ENCODE measurements at regions of chr6 and their contacts with region 1.

Region 1: DNA sequence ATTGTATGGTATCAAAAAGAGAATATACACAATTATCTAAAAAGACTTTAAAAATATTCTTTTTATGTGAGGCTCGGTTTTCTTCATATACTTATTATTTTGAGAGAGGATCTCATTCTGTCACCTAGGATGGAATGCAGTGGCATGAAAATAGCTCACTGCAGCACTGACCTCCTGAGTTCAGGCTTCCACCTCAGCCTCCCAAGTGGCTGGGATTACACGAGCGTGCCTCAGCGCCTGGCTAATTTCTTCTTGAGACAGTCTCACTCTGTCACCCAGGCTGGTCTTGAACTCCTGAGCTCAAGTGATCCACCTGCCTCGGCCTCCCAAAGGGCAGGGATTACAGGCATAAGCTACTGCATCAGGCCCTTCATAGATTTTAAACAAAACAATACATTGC is 10.7 kb downstream of the DEK start:
- DNase-seq: no peak
- H3K4me3 ChIP-seq: no peak overlapping the region
- H3K27ac ChIP-seq: no peak overlapping the region
- H3K4me1 ChIP-seq: no peaks in the 10 kb centered on the region
- H3K27me3 ChIP-seq: no peaks in the 10 kb centered on the region
- CTCF ChIP-seq: no peak
- EP300 ChIP-seq: no peak
- POLR2A ChIP-seq: no peak
- RAD21 ChIP-seq: no peak

Region 2: DNA sequence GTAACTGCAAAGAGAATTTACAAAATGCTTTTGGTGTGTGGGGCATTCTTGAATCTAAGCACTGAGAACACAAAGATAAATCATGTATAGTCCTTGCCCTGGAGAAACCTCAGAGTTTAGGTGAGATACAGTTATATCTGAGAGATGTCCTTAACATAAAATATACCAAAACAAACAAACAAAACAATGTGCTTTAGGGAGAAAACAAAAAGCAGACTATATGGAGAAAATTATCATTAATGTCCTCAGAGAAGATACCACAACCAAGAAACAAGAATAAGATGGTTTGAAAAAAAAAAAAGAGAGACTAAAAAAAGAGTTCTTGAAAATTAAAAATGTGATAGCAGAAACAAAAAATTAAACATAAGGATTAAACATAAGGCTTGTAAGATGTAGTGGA is 274.2 kb before region 1 on chr6:
- CTCF ChIA-PET with region 1: no interaction called
- POLR2A ChIA-PET with region 1: no interaction called
- DNase-seq: no peak
- H3K4me3 ChIP-seq: no peak overlapping the region
- H3K27ac ChIP-seq: no peak overlapping the region
- H3K4me1 ChIP-seq: peaks cover 0 to 5% (median 4%) of the 10 kb centered on the region in 4 experiments; a peak in 5 of 7 replicates
- H3K27me3 ChIP-seq: no peaks in the 10 kb centered on the region
- CTCF ChIP-seq: no peak
- EP300 ChIP-seq: no peak
- POLR2A ChIP-seq: no peak
- RAD21 ChIP-seq: no peak

Region 3: GRCh38 chr6:18242062-18242851 is 11.4 kb before region 1 on chr6:
- CTCF ChIA-PET with region 1: interaction called, 4 read pairs
- POLR2A ChIA-PET with region 1: interaction called, 21 read pairs
- DNase-seq: no peak
- H3K4me3 ChIP-seq: no peak overlapping the region
- H3K27ac ChIP-seq: no peak overlapping the region
- H3K4me1 ChIP-seq: no peaks in the 10 kb centered on the region
- H3K27me3 ChIP-seq: peaks cover 0 to 1% (median 0%) of the 10 kb centered on the region in 4 experiments; a peak in 1 of 7 replicates
- CTCF ChIP-seq: no peak
- EP300 ChIP-seq: no peak
- POLR2A ChIP-seq: no peak
- RAD21 ChIP-seq: no peak